Natural killer cell (primary cell): ENCODE measurements at regions of chr1 and their contacts with region 1.

Region 1: DNA sequence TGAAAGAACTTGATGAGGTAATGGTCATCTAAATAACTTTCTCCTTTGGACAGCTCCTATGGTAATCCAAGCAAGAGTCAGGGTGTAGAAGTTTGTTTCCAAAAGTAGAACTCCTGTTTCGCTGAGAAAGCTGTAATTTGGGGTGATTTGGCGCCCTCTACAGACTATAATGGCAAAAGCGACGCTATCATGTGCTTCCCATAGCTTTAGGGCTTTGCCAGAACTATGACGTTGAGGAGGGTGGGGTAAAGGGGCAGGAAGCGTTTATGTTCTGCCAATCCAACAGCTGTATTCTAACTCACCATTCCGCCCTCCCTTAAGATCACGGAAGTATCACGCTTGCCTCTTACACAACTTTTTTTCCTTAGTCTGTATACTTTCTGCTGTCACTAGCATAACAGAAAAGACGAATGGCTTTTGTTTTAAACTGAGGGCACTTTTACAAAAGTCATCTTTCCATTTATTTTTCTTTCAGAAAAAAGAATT is at the start of gene FMO4:
- DNase-seq: peak; percentile 59 to 96
- ATAC-seq: peak; percentile 100
- H3K4me3 ChIP-seq: no peak within 1 kb of the TSS
- H3K4me3 Mint-ChIP-seq: peak within 1 kb of the TSS; percentile 84
- H3K27ac ChIP-seq: peak within 1 kb of the TSS; percentile 63
- H3K27ac Mint-ChIP-seq: peak within 1 kb of the TSS; percentile 83 to 94
- H3K4me1 ChIP-seq: peaks cover 2% of the 10 kb centered on the region
- H3K4me1 Mint-ChIP-seq: peaks cover 16 to 18% of the 10 kb centered on the region in 2 donors
- H3K27me3 ChIP-seq: no peaks in the 10 kb centered on the region
- H3K27me3 Mint-ChIP-seq: no peaks in the 10 kb centered on the region
- CTCF ChIP-seq: peak; percentile 81
- total RNA-seq, gene FMO4: 3.2 to 3.8 (median 3.6) TPM

Region 2: DNA sequence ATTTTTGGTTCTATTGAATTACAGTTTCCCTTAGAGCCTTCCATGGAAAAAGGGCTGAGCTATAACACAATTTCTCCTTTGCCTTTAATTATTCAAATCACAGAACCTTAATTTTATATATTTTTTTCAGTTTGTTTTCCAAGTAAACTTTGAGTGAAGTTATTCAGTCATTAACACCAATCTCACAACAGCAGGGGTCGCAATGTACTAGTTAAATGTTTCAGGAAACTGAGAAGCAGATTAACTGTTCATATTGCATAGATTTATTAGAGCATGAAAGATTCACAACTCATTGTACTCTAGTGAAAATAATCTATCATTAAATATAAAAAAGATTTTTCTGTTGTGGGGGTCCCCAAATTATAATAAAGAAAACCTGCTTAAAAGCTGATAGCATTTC is 1303.4 kb before region 1 on chr1:
- intact Hi-C with region 1: loop called (anchors 5 kb)
- DNase-seq: peak in 1 of 2 donors; percentile 34
- ATAC-seq: peak in 1 of 3 donors; percentile 38
- H3K4me3 ChIP-seq: no peak overlapping the region
- H3K4me3 Mint-ChIP-seq: no peak overlapping the region
- H3K27ac ChIP-seq: no peak overlapping the region
- H3K27ac Mint-ChIP-seq: no peak overlapping the region
- H3K4me1 ChIP-seq: no peaks in the 10 kb centered on the region
- H3K4me1 Mint-ChIP-seq: no peaks in the 10 kb centered on the region
- H3K27me3 ChIP-seq: no peaks in the 10 kb centered on the region
- H3K27me3 Mint-ChIP-seq: no peaks in the 10 kb centered on the region
- CTCF ChIP-seq: peak; percentile 44

Region 3: GRCh38 chr1:170531758-170532657 is 781.9 kb before region 1 on chr1 and contains the start of gene GORAB:
- intact Hi-C with region 1: loop called (anchors 5 kb)
- DNase-seq: peak; percentile 83 to 91
- ATAC-seq: peak; percentile 95 to 96 (median 96)
- H3K4me3 ChIP-seq: peak within 1 kb of the TSS; percentile 65
- H3K4me3 Mint-ChIP-seq: no peak within 1 kb of the TSS
- H3K27ac ChIP-seq: peak within 1 kb of the TSS; percentile 79
- H3K27ac Mint-ChIP-seq: no peak within 1 kb of the TSS
- H3K4me1 ChIP-seq: peaks cover 5% of the 10 kb centered on the region
- H3K4me1 Mint-ChIP-seq: peaks cover 6 to 11% of the 10 kb centered on the region in 2 donors
- H3K27me3 ChIP-seq: peaks cover 2% of the 10 kb centered on the region
- H3K27me3 Mint-ChIP-seq: peaks cover 0 to 7% of the 10 kb centered on the region in 2 donors
- CTCF ChIP-seq: no peak
- total RNA-seq, gene GORAB: 17.4 to 23.6 (median 20.8) TPM

Region 4: DNA sequence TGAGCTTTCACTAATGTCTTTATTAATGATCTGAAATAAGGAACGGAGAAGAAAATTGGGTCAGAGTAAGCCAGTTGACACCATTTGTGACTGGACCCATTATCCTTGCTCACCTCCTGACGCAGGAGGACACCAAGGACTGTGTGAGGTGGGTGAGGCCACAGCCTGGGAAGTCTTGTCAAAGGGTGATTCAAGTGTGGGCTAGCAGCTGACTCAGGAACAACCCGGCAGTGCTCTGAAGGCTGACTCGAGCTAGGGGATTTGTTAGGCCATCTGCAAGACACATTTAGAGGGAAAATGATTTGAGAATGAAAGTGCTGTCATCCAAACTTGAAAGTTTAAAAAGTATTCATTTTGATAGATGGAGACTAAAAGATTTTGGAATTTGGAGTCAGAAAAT is 628.7 kb before region 1 on chr1:
- intact Hi-C with region 1: loop called (anchors 5 kb)
- DNase-seq: no peak
- ATAC-seq: no peak
- H3K4me3 ChIP-seq: no peak overlapping the region
- H3K4me3 Mint-ChIP-seq: no peak overlapping the region
- H3K27ac ChIP-seq: no peak overlapping the region
- H3K27ac Mint-ChIP-seq: no peak overlapping the region
- H3K4me1 ChIP-seq: no peaks in the 10 kb centered on the region
- H3K4me1 Mint-ChIP-seq: peaks cover 0 to 5% of the 10 kb centered on the region in 2 donors
- H3K27me3 ChIP-seq: no peaks in the 10 kb centered on the region
- H3K27me3 Mint-ChIP-seq: peaks cover 18 to 19% of the 10 kb centered on the region in 2 donors
- CTCF ChIP-seq: no peak

Region 5: GRCh38 chr1:170967042-170967910 is 346.6 kb before region 1 on chr1:
- intact Hi-C with region 1: loop called (anchors 5 kb)
- DNase-seq: peak in 1 of 2 donors; percentile 36
- ATAC-seq: no peak
- H3K4me3 ChIP-seq: no peak overlapping the region
- H3K4me3 Mint-ChIP-seq: no peak overlapping the region
- H3K27ac ChIP-seq: no peak overlapping the region
- H3K27ac Mint-ChIP-seq: no peak overlapping the region
- H3K4me1 ChIP-seq: no peaks in the 10 kb centered on the region
- H3K4me1 Mint-ChIP-seq: no peaks in the 10 kb centered on the region
- H3K27me3 ChIP-seq: no peaks in the 10 kb centered on the region
- H3K27me3 Mint-ChIP-seq: peaks cover 0 to 2% of the 10 kb centered on the region in 2 donors
- CTCF ChIP-seq: peak; percentile 22